ENCODE measurements at regions of chr2 and their contacts with region 1.

Region 1: GRCh38 chr2:52775674-52776073 is 991.9 kb upstream of the CHAC2 start:
- DNase-seq: no peak
- H3K4me3 ChIP-seq: no peak overlapping the region
- H3K27ac ChIP-seq: no peak overlapping the region
- H3K4me1 ChIP-seq: no peaks in the 10 kb centered on the region
- H3K27me3 ChIP-seq: no peaks in the 10 kb centered on the region
- CTCF ChIP-seq: no peak

Region 2: DNA sequence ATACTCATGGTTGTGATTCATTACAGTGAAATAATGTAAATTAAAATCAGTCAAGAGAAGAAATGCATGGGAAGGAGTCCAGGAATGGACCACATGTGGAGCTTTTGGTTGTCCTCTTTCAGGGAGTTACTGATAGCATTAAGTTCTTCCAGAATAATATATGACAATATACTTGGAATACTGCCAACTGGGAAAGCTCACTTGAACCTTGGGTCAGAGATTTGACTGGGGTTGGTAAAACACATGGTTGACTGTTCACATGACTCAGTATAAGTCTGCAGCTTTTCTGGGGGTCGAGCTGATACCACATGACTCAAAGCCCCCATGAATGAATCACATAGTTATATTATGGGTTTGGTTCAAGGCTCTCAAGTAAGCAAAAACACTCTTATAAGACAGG is 117.1 kb before region 1 on chr2:
- CTCF ChIA-PET with region 1: no interaction called
- POLR2A ChIA-PET with region 1: no interaction called
- intact Hi-C with region 1: no loop called
- DNase-seq: no peak
- H3K4me3 ChIP-seq: no peak overlapping the region
- H3K27ac ChIP-seq: no peak overlapping the region
- H3K4me1 ChIP-seq: no peaks in the 10 kb centered on the region
- H3K27me3 ChIP-seq: no peaks in the 10 kb centered on the region
- CTCF ChIP-seq: no peak

Region 3: DNA sequence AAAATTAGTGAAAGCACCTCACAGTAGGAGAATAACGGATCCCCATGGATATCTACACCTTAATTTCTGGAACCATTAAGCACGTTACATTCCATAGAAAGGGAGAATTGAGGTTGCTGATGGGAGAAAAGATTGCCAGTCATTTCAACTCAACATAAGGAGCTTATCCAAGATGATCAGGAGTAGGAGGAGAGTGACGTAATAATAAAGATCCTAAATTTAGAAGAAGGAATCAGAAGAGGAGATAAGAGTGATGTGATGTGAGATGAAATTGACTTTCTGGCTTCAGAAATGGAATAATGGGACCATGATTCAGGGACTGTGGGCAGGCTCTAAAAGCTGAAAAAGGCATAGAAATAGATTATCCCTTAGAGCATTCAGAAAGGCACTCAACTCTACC is 25.9 kb before region 1 on chr2:
- CTCF ChIA-PET with region 1: no interaction called
- POLR2A ChIA-PET with region 1: interaction called, 13 read pairs
- intact Hi-C with region 1: no loop called
- DNase-seq: no peak
- H3K4me3 ChIP-seq: no peak overlapping the region
- H3K27ac ChIP-seq: no peak overlapping the region
- H3K4me1 ChIP-seq: no peaks in the 10 kb centered on the region
- H3K27me3 ChIP-seq: no peaks in the 10 kb centered on the region
- CTCF ChIP-seq: no peak